HAP-1 (cell line): ENCODE measurements at regions of chr4 and their contacts with region 1.

Region 1: GRCh38 chr4:99405433-99406115 is 29.6 kb downstream of the ADH7 start:
- DNase-seq: peak; percentile 71 to 81
- H3K4me3 ChIP-seq: no peak overlapping the region
- H3K4me1 ChIP-seq: peaks cover 13% of the 10 kb centered on the region
- H3K27me3 ChIP-seq: no peaks in the 10 kb centered on the region

Region 2: GRCh38 chr4:99120501-99120900 is 285.1 kb before region 1 on chr4:
- in situ Hi-C with region 1: loop called (anchors 10 kb)
- DNase-seq: no peak
- H3K4me3 ChIP-seq: no peak overlapping the region
- H3K4me1 ChIP-seq: no peaks in the 10 kb centered on the region
- H3K27me3 ChIP-seq: no peaks in the 10 kb centered on the region

Region 3: DNA sequence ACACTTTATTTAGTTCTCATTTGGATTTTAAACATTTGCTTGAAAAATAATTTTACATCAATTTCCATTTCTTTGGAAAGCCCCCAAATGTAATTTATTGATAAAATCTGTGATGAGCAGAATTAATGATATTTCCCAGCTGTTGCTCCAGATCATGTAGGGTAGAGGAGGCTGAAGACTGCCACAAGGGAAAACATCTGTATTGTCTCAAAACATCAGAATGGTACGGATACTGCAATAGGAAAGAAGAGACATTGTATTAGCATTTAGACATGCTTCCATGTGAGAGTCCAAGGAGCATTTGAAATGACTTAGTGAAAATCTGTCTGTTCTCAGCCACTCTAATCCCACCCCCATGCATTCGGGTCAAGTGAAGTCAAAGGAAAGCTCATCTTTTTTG is 129.2 kb before region 1 on chr4:
- in situ Hi-C with region 1: no loop called
- DNase-seq: no peak
- H3K4me3 ChIP-seq: no peak overlapping the region
- H3K4me1 ChIP-seq: no peaks in the 10 kb centered on the region
- H3K27me3 ChIP-seq: no peaks in the 10 kb centered on the region; the same call in 1 of the 2 replicates

Region 4: GRCh38 chr4:100189820-100190642 is 784.5 kb after region 1 on chr4 and contains the start of gene DDIT4L:
- in situ Hi-C with region 1: no loop called
- DNase-seq: peak; percentile 45 to 84
- H3K4me3 ChIP-seq: peak within 1 kb of the TSS; percentile 48
- H3K4me1 ChIP-seq: peaks cover 22% of the 10 kb centered on the region
- H3K27me3 ChIP-seq: no peaks in the 10 kb centered on the region